Left ventricle myocardium superior (tissue), 1 donor: ENCODE measurements at regions of chr2 and their contacts with region 1.

Region 1: DNA sequence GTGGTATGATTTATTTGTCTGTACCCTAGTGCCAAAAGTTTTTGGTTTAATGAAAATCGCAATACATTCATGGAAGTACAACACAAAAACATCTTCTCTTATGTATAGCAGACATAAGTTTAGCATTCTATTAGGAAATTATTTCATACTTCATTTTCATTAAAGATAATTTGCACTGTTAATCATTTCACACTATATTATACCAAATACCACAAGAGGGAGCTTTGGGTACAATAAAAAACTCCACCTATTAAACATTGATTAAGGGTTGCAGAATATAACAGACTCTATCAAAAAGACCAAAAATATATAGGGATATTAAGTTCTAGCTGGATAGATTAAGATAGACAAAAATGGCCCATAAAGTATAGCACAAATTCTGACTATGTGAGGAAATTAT is 79.0 kb downstream of the SLC66A3 start:
- DNase-seq: no peak
- ATAC-seq: peak; percentile 46

Region 2: DNA sequence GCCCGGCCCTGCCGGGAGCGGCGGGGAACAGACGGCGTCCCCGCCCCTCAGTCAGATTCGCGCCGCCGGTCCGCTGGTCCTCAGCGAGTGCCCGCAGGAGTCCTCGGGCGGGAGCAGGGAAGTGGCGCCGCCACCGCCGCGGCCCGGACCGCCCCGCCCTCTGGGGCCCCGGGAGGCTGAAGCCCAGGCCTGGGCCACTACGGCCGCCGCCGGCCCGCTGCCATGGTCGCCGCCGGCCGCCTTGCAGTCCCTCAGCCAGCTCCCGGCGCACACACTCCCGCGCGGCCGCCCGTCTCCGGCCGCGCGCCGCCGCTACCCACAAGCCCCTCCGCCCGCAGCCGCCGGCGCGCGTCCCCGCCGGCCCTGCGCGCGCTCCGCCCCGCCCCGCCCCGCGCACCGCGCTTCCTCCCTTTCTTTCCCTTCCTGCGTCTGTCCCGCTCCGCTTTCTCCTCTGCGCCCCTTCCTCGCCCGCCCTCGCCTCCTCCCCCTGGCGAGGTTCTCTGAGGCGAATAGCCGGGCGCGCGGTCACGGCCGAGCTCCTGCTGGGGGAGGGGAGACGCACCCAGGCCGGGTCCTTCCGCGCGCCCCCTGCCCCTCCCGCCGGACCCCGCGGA is 110.1 kb after region 1 on chr2 and contains the start of gene ROCK2:
- intact Hi-C with region 1: loop called (anchors 10 kb)
- DNase-seq: peak; percentile 94
- ATAC-seq: peak; percentile 84
- total RNA-seq, gene ROCK2: 34.2 TPM

Region 3: DNA sequence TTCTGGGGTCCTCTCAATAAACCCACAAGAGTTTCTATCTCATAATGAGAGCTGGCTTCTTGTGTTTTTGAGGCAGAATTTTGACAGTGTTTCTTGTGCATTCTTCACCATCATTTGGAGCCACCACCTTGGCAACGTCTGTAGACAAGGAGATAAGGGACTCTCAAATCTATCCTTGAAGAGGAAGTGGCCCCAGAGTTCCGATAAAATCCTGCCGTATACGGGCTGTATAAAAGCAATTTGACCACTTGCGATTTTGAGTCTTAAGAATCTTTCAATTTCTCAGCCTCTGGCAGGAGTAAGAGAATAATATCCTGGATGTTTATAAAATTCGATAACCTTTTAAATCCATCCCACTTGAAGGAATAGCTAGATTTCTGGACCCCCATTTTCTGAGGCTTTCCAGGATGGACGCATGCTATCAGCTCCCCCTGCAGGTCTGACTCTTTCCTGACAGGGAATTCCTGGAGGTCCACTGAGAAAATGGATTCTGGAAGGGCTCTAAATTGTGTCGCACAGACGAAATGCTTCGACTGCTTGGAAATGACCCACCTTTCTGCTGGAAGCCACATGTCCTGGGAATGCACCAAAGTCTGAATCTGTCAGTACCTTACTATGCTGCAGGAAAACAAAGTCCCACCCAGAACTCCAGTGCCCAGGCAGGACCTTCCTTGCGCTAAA is 177.6 kb after region 1 on chr2:
- intact Hi-C with region 1: loop called (anchors 2 kb)
- DNase-seq: peak; percentile 34
- ATAC-seq: peak; percentile 78

Region 4: GRCh38 chr2:11446733-11447248 is 212.5 kb after region 1 on chr2:
- intact Hi-C with region 1: loop called (anchors 10 kb)
- DNase-seq: peak; percentile 33
- ATAC-seq: peak; percentile 81